ENCODE measurements at regions of chr21 and their contacts with region 1.

Region 1: GRCh38 chr21:34936371-34936789 is 112.7 kb downstream of the RUNX1 start:
- DNase-seq: no peak
- H3K4me3 ChIP-seq: no peak overlapping the region
- H3K4me3 Mint-ChIP-seq: no peak overlapping the region
- H3K27ac ChIP-seq: peak overlapping the region in 1 of 2 donors; percentile 28
- H3K27ac Mint-ChIP-seq: peak overlapping the region in 1 of 7 donors; percentile 7
- H3K4me1 ChIP-seq: peaks cover 42 to 70% of the 10 kb centered on the region in 2 donors
- H3K4me1 Mint-ChIP-seq: peaks cover 82% of the 10 kb centered on the region
- H3K27me3 ChIP-seq: no peaks in the 10 kb centered on the region
- H3K27me3 Mint-ChIP-seq: peaks cover 0 to 2% (median 0%) of the 10 kb centered on the region in 3 donors
- CTCF ChIP-seq: no peak

Region 2: DNA sequence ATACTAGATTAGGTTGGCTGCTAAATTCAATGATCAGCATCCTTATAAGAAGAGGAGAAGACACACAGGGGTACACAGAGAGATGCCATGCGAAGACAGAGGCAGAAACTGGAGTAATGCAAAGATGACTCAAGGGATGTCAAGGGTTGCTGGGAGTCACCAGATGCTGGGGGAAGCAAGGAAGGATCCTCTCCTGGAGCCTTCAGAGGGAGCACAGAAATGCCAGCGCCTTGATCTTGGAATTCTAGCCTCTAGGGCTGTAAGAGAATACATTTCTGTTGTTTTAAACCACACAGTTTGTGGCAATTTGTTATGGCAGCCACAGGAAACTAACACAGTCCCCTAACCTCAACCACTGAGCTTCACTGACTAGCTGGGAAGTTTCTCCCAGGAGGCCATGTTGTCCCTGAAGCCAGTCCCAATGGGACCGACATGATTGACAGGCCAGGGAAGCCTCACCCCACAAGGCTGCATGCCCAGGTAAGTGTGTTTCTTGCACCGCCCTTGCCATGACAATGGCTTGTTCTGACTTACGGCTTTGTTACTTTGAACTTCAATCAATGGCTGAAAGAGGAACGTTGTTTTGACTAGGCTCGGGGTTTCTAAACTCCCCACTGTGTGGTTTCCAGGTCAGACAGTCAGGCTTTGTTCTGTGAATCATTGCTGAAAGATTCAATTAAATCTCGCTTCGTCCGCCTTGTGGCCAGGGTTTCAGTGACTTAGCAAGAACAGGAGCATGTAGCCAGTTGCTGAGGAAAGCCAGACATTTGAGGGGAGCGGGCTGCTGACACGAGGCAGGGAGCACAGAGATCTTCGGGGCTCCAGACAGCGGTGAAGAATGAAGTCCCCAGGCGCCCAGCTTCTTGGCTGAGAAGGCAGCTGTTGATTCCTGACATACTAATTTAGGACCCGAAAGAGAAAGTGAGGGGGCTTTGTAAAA is 50.5 kb after region 1 on chr21:
- intact Hi-C with region 1: loop called in 1 of 2 experiments (anchors 5 kb)
- DNase-seq: peak in 2 of 3 donors; percentile 41 to 51
- H3K4me3 ChIP-seq: no peak overlapping the region
- H3K4me3 Mint-ChIP-seq: no peak overlapping the region
- H3K27ac ChIP-seq: peak overlapping the region in 1 of 2 donors; percentile 2
- H3K27ac Mint-ChIP-seq: peak overlapping the region in 6 of 7 donors; percentile 10 to 76 (median 34)
- H3K4me1 ChIP-seq: peaks cover 27 to 41% of the 10 kb centered on the region in 2 donors
- H3K4me1 Mint-ChIP-seq: peaks cover 77% of the 10 kb centered on the region
- H3K27me3 ChIP-seq: no peaks in the 10 kb centered on the region
- H3K27me3 Mint-ChIP-seq: peaks cover 0 to 3% (median 0%) of the 10 kb centered on the region in 3 donors
- CTCF ChIP-seq: no peak

Region 3: DNA sequence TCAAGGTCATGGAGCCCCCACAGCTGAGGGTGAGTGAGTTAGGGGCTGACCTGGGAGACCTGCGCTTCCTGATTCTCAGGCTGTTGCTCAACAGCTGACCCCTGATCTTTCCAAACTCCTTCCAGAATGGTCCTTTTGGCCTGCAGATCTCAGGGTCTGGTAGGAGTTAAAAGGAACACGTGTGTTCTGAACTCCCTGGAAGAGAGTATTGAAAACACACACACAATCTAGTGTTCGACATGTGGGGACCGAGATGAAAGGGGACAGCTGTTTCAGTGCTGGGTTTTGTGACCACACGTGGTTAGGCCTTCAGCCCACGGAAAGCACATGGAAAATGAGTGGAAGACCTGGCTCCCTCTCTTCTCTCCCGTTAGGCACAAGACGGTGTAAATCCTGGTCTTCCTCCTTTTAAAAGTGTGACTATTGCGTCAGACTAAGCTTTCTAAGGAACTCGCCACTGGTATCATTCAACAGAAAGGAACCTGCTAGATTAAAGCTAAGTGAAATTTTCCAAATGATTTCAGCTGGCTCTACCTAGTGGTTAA is 63.1 kb after region 1 on chr21:
- intact Hi-C with region 1: no loop called
- DNase-seq: peak in 2 of 3 donors; percentile 51 to 64
- H3K4me3 ChIP-seq: no peak overlapping the region
- H3K4me3 Mint-ChIP-seq: peak overlapping the region in 1 of 2 donors; percentile 26
- H3K27ac ChIP-seq: peak overlapping the region in 1 of 2 donors; percentile 34
- H3K27ac Mint-ChIP-seq: peak overlapping the region in 6 of 7 donors; percentile 45 to 80 (median 56)
- H3K4me1 ChIP-seq: peaks cover 51 to 55% of the 10 kb centered on the region in 2 donors
- H3K4me1 Mint-ChIP-seq: peaks cover 72% of the 10 kb centered on the region
- H3K27me3 ChIP-seq: no peaks in the 10 kb centered on the region
- H3K27me3 Mint-ChIP-seq: no peaks in the 10 kb centered on the region
- CTCF ChIP-seq: no peak